ENCODE measurements at regions of chr20 and their contacts with region 1.

Region 1: GRCh38 chr20:19974626-19975435 is 42.3 kb upstream of the NAA20 start:
- DNase-seq: peak; percentile 91
- ATAC-seq: peak; percentile 82

Region 2: DNA sequence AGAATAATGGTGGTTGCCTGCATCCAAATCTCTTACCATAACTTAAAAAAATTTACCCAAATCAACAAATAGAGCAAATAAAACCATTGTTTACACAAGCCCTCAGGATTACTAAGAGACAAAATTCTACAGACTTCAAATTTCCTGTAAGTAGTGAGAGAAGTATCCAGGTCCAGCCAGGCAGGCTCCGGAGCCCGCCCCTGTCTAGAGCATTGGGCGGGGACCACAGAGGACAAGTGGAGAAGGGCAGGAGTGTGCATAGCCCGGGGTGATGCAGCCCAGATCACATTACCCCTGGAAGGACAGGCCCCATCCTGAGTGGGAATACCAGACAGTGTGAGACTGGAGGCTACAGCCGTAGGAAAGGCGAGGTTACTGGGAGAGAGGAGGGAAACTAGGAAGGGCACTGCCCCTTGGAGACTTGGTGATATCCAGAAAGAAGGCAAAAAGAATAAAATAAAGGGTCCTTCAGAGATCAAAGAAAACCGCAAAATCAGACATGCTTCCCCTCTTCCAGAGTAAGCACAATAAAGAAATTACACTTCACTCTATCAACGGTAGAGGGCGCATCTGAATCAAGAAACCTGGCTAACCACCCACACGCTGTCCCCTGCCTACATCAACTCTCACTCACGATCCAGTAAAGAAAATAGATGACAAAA is 190.2 kb before region 1 on chr20:
- intact Hi-C with region 1: loop called (anchors 1 kb)
- DNase-seq: no peak
- ATAC-seq: peak; percentile 78

Region 3: DNA sequence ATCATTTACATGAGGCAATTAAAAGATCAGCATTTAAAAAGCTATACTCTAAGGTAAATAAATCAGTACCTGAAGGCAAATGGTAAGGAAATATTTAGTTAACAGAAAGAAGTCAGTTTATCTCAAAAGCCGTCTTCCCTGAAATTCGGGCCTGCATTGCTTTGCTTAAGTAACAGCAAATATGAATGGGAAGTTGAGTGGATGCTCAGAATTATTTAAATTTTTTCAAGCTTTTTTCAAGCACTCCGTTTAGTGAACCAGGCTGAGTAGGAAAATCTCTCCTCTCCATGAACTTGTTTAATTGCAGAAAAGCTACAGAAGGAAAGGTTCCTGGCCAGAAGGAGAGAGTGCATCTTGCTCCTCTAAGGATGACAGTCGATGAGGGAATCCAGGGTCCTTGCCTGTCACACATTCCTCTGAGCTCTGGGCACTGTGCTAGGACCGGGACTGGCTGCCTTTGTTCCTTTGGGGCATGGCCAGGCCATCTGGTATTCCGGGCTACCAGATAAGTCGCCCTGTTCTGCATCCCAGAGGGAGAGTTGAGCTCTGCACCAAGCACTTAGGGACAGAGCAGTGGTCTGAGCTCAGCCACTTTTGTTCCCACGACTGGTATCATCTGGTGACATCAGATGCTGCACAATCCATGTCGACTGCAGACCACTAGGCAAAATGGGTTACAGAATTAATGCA is 139.2 kb before region 1 on chr20:
- intact Hi-C with region 1: loop called (anchors 5 kb)
- DNase-seq: peak; percentile 74
- ATAC-seq: peak; percentile 97

Region 4: GRCh38 chr20:19921284-19921793 is 53.5 kb before region 1 on chr20:
- intact Hi-C with region 1: loop called (anchors 5 kb)
- DNase-seq: peak; percentile 71
- ATAC-seq: peak; percentile 92

Region 5: DNA sequence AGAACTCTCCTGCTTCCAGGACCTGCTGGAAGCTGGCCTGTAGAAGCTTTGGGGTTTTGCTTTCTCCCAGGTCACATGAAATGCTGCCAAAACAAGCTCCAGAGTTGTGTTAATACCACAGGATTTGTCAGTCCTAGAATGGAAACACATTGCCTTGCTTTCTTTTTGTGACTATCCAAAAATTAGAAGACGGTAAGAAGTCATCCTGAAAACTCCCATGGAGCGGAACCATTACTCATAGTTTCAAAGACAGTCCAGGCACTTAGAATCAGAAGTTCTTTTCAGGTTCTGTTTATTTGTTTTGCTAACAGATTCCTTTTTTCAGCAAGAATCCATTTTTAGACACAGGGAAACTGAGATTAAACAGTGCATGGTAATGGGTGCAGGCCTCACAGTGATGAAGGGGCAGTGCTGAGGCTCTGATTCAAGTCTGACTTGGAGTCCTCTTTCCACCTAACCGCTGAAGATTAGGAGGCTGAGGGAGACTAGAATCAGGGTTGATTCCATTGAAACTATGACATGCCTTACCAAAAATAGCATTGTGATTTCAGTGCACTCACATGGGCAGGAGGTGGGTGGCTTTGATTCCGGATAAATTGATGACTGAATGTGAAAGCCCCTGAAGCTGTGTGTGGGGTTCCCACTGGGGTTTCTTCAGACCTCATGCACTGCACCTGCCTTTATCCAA is 29.9 kb before region 1 on chr20:
- intact Hi-C with region 1: loop called (anchors 2 kb)
- DNase-seq: no peak
- ATAC-seq: peak; percentile 30

Region 6: DNA sequence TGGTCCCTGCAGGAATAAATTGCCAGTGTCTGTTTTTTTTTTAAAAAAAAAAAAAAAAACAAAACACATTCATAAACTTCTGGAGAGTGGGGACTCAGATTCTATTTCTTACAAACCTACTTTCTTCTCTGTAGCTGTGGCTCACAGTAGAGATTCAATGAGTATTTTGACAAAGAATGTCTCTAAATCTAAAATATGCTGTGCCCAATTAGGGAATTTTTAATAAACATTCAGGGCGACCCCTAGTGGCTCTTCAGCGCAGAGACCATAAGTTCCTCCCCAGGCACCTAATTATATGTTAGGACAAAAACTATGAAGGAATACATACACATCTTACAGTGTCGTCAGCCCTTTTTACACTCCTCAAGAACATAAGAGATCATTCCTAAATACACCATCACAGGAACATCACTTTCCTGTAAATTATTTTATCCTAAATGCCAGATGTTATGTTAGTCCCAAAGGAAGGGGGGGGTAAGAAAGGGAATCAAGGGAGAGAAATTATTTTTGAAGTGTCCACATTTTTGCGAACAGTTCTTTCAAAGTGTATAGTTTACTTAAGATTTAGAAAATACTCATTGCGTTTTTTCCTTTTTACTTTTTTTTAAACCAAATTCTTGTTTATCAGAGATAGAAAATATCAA is 20.5 kb after region 1 on chr20:
- intact Hi-C with region 1: loop called (anchors 2 kb)
- DNase-seq: no peak
- ATAC-seq: no peak